Activated T-helper 1 cell treated with anti-CD3 and anti-CD28 coated beads, Interleukin-12 subunit alpha, Interleukin-12 subunit beta, Interleukin-2, Interleukin-4 antibody, amounts not matched to agents 30 ng/mL and 10 ng/mL and 1 ng/mL, durations not matched to agents 14 hours and 24 hours and 36 hours (primary cell): ENCODE measurements at regions of chr14 and their contacts with region 1.

Region 1: GRCh38 chr14:63852817-63853731 is at the start of gene SYNE2:
- DNase-seq: peak; percentile 81
- H3K4me3 Mint-ChIP-seq: peak within 1 kb of the TSS; percentile 97
- H3K27ac Mint-ChIP-seq: peak within 1 kb of the TSS; percentile 97
- H3K4me1 Mint-ChIP-seq: peaks cover 43% of the 10 kb centered on the region
- H3K27me3 Mint-ChIP-seq: peaks cover 4% of the 10 kb centered on the region
- total RNA-seq, gene SYNE2: 25.1 and 26.9 TPM in 2 replicates

Region 2: GRCh38 chr14:63727774-63728728 is 125.0 kb before region 1 on chr14 and contains the start of gene SGPP1:
- intact Hi-C with region 1: loop called (anchors 5 kb)
- DNase-seq: peak; percentile 81
- H3K4me3 Mint-ChIP-seq: peak within 1 kb of the TSS; percentile 99
- H3K27ac Mint-ChIP-seq: peak within 1 kb of the TSS; percentile 99
- H3K4me1 Mint-ChIP-seq: peaks cover 33% of the 10 kb centered on the region
- H3K27me3 Mint-ChIP-seq: peaks cover 16% of the 10 kb centered on the region
- total RNA-seq, gene SGPP1: 14.7 and 14.8 TPM in 2 replicates

Region 3: GRCh38 chr14:63867933-63868921 is 15.2 kb after region 1 on chr14:
- intact Hi-C with region 1: loop called (anchors 1 kb)
- DNase-seq: peak; percentile 11
- H3K4me3 Mint-ChIP-seq: peak overlapping the region; percentile 54
- H3K27ac Mint-ChIP-seq: peak overlapping the region; percentile 69
- H3K4me1 Mint-ChIP-seq: peaks cover 78% of the 10 kb centered on the region
- H3K27me3 Mint-ChIP-seq: no peaks in the 10 kb centered on the region

Region 4: DNA sequence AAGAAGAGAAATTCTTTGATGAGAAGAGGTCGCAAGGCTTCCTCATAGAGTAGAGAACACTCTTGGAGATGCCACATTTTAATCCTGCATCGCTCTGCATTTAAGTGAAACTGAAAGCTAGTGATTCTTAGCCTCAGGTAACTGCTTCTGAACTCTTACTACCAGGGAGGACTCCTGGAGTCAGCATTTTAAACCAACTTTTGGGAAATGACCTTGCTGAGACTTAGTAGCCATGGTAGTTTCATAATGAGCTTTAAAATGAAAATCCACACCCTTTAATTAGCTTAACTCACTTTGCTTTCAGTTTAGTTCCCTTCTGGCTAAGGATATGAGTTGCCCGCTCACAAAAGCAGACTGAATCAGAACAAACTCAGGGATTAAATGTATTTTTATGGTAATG is 80.0 kb after region 1 on chr14:
- intact Hi-C with region 1: loop called (anchors 2 kb)
- DNase-seq: no peak
- H3K4me3 Mint-ChIP-seq: peak overlapping the region; percentile 31
- H3K27ac Mint-ChIP-seq: peak overlapping the region; percentile 24
- H3K4me1 Mint-ChIP-seq: peaks cover 30% of the 10 kb centered on the region
- H3K27me3 Mint-ChIP-seq: no peaks in the 10 kb centered on the region

Region 5: DNA sequence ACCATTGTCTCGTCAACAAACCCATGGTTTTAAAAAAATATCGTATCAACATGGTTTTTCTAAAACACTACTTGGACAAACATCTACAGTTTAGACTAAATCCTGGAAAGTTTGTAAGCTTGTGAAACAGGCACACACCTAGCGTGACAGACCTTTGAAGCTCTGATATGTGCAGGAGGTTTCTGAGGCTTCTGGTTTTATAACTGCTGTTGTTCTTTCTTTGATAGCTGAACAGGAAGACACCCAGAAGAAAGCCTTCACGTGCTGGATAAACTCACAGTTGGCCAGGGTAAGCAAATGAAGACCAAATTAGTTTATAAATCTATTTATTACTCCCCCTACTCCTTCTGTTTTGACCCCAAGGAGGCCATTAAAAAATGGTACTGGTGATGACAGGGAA is 87.3 kb after region 1 on chr14:
- intact Hi-C with region 1: loop called (anchors 2 kb)
- DNase-seq: no peak
- H3K4me3 Mint-ChIP-seq: peak overlapping the region; percentile 23
- H3K27ac Mint-ChIP-seq: peak overlapping the region; percentile 45
- H3K4me1 Mint-ChIP-seq: peaks cover 23% of the 10 kb centered on the region
- H3K27me3 Mint-ChIP-seq: no peaks in the 10 kb centered on the region

Region 6: DNA sequence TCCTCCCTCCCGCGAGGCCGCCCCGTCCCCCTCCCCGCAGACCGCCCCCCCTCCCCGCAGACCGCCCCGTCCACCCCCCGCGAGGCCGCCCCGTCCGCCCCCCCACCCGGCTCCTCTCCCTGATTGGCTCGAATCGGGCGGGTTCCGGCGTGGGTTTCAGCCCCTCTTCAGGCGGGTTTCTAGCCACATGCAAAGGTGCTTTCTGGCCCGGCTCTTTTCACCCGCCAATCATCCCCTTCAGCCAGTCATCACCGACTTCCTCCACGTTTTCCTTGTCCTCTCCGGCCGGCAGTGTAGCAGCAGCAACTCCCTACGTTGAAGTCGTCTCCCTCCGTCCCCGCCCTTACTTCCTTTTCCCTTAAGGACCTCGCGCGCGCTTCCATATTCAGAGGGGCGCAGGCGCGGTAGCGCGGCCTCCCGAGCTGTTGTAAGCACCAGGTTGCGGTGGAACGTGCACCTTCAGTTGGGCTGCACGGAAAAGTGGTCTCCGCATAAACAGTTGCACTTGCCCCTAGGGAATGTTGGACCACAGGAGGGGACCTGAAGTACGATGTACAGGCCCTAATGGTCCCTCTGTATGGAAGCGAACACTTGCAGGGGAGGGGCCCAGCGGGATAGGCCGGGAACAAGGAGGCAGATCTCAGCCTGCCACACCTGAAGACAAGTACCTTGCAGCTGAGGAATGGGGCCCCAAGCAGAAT is 485.7 kb after region 1 on chr14:
- intact Hi-C with region 1: loop called (anchors 5 kb)
- DNase-seq: peak; percentile 85
- H3K4me3 Mint-ChIP-seq: peak overlapping the region; percentile 81
- H3K27ac Mint-ChIP-seq: peak overlapping the region; percentile 84
- H3K4me1 Mint-ChIP-seq: peaks cover 29% of the 10 kb centered on the region
- H3K27me3 Mint-ChIP-seq: no peaks in the 10 kb centered on the region